A673 (cell line): ENCODE measurements at regions of chr14 and their contacts with region 1.

Region 1: GRCh38 chr14:77903221-77903620 is 103.3 kb downstream of the ADCK1 start:
- DNase-seq: peak; percentile 59
- H3K4me3 ChIP-seq: no peak overlapping the region
- H3K27ac ChIP-seq: no peak overlapping the region
- H3K4me1 ChIP-seq: peaks cover 14% of the 10 kb centered on the region
- H3K27me3 ChIP-seq: no peaks in the 10 kb centered on the region
- CTCF ChIP-seq: no peak

Region 2: GRCh38 chr14:77741438-77741837 is 161.8 kb before region 1 on chr14:
- CTCF ChIA-PET with region 1: no interaction called
- POLR2A ChIA-PET with region 1: interaction called, 20 read pairs
- intact Hi-C with region 1: no loop called
- DNase-seq: no peak
- H3K4me3 ChIP-seq: no peak overlapping the region
- H3K27ac ChIP-seq: no peak overlapping the region
- H3K4me1 ChIP-seq: no peaks in the 10 kb centered on the region
- H3K27me3 ChIP-seq: no peaks in the 10 kb centered on the region
- CTCF ChIP-seq: no peak